Spleen (tissue), 13 donors: ENCODE measurements at regions of chr5 and their contacts with region 1.

Region 1: DNA sequence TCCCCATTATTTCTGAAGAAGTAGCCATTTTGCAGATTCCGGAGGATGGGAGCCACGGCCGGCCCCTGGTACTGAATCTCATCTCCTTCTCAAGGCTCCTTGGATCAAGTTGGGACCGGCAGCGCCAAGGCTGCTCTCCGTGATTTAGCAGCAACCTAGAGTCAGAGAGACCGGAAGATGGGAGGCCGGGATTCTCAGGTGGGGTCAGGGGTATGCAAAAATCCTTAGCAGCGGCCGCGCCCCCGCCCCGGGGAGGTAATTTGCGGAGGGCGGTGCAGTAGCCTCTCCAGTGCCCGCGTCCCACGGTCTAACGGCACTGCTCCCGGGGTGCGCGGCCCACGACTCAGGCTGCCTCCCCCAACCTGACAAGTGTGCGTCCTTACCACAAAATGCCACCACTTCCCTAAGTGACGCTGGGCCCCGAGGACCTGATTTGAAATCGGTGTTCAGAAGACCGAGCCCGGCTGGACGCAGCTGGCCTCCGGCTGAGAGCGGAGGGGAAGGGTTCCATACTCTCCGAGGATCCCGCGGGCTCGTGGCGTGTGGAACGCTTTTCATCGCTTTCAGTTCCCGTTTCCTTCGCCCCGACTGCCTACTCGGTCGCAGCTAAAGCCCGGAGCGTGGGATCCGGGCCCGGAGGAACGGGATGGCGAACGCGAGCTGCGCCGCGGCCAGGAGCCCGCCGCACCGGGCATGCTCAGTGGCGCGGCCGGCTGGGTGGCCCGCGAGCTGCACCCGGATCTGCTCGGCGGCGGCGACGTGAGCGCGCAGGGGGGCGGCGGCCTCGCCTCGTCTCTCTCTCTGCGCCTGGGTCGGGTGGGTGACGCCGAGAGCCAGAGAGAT is at the start of gene SCAMP1:
- DNase-seq: peak; percentile 99
- H3K4me3 ChIP-seq: peak within 1 kb of the TSS; percentile 83 to 99 (median 94)
- H3K27ac ChIP-seq: peak within 1 kb of the TSS; percentile 88 to 96 (median 92)
- H3K4me1 ChIP-seq: peaks cover 18 to 60% (median 34%) of the 10 kb centered on the region in 6 donors
- H3K27me3 ChIP-seq: no peaks in the 10 kb centered on the region
- CTCF ChIP-seq: peak in 10 of 11 experiments; percentile 7 to 81 (median 60)
- POLR2A ChIP-seq: peak; percentile 10 to 31 (median 23)
- total RNA-seq, gene SCAMP1: 20.1 to 28.2 (median 23.6) TPM

Region 2: DNA sequence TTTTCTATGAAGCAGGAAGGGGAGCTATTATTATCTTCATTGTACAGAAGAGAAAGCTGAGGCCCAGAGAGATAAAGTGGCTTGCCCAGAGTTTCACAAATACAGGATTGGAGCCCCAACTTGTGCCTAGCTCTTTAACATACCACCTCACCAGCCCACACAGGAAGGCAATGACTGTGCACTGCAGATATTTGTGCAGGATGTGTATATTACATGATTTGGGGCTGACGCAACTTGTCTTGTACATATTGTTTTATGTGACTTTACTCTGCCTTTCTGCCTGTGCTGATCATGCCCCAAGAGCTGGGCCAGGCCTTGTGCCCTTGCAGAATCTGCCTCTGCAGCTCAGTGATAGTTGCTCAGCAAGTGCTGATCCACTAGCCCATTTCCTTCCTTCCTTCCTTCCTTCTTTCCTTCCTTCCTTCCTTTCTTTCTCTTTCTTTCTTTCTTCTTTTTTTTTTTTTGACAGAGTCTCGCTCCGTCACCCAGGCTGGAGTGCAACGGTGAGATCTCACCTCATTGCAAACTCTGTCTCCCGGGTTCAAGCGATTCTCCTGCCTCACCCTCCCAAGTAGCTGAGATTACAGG is 477.3 kb before region 1 on chr5:
- intact Hi-C with region 1: no loop called
- DNase-seq: no peak
- H3K4me3 ChIP-seq: no peak overlapping the region
- H3K27ac ChIP-seq: peak overlapping the region in 3 of 8 donors; percentile 3 to 30 (median 24)
- H3K4me1 ChIP-seq: peaks cover 0 to 6% (median 0%) of the 10 kb centered on the region in 6 donors
- H3K27me3 ChIP-seq: peaks cover 0 to 10% (median 0%) of the 10 kb centered on the region in 7 donors
- CTCF ChIP-seq: no peak
- POLR2A ChIP-seq: no peak

Region 3: GRCh38 chr5:78294248-78295034 is 65.6 kb before region 1 on chr5 and contains the start of gene AP3B1:
- intact Hi-C with region 1: loop called (anchors 2 kb)
- DNase-seq: peak; percentile 100
- H3K4me3 ChIP-seq: peak within 1 kb of the TSS; percentile 75 to 91 (median 82)
- H3K27ac ChIP-seq: peak within 1 kb of the TSS; percentile 73 to 96 (median 91)
- H3K4me1 ChIP-seq: peaks cover 6 to 56% (median 42%) of the 10 kb centered on the region in 6 donors
- H3K27me3 ChIP-seq: no peaks in the 10 kb centered on the region
- CTCF ChIP-seq: peak in 1 of 11 experiments; percentile 15
- POLR2A ChIP-seq: peak in 2 of 3 donors; percentile 69 to 76
- total RNA-seq, gene AP3B1: 47.0 to 76.2 (median 49.1) TPM

Region 4: GRCh38 chr5:78339617-78340436 is 20.2 kb before region 1 on chr5:
- intact Hi-C with region 1: no loop called
- DNase-seq: no peak
- H3K4me3 ChIP-seq: no peak overlapping the region
- H3K27ac ChIP-seq: peak overlapping the region in 3 of 8 donors; percentile 17 to 43 (median 23)
- H3K4me1 ChIP-seq: no peaks in the 10 kb centered on the region
- H3K27me3 ChIP-seq: no peaks in the 10 kb centered on the region
- CTCF ChIP-seq: no peak
- POLR2A ChIP-seq: no peak